ENCODE measurements at regions of chr6 and their contacts with region 1.

Region 1: DNA sequence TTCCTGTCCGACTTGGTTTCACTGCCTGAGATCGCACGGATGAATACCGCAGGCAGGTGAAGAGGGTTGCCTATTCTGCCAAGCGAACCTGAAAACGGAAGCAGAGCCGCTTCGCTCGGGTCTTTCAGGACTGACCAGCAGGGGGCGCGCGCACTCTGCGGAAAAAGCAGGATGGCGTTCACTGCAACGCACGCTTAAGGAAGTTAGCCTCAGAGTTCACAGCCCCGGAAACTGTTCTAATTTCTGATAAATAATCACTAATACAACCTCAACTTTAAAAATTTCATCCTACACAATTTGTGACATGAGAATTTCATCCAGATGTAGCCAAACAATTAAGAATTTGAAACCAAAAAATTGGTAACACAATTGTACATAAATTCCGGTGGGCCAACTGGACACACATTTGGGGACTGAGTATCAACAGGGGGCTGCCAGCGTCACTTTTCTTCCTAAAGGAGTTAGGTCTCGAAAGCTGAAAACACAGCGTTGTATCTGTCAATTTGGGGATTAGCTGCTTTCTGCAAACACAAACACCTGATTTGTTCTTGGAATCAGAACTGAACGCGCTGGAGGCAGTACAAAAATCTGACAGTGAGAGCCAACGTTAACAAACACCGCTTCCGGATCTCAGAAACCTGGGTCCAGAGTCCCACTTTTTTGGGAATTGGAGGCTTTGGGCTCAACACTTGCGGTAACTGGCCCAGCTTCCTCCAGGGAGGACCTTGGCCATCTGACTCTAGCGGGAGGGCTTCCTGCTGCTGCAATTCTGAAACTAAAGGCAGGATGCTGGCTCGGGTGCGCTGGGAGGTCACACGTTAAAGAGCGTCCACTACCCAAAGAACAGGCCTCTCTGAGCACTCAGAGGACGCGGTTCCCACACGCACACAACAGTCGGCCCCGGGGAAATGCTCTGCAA is 8.8 kb downstream of the PXDC1 start:
- DNase-seq: peak; percentile 92
- H3K4me3 ChIP-seq: peak overlapping the region in 3 of 4 donors; percentile 11 to 22 (median 19)
- H3K27ac ChIP-seq: peak overlapping the region; percentile 74 to 100 (median 88)
- H3K4me1 ChIP-seq: peaks cover 0 to 99% (median 93%) of the 10 kb centered on the region in 4 donors
- H3K27me3 ChIP-seq: no peaks in the 10 kb centered on the region
- CTCF ChIP-seq: peak; percentile 86 to 96 (median 94)
- EP300 ChIP-seq: peak in 2 of 4 donors; percentile 13 to 18
- POLR2A ChIP-seq: no peak

Region 2: GRCh38 chr6:3848925-3849605 is 106.4 kb after region 1 on chr6 and contains the start of gene FAM50B:
- intact Hi-C with region 1: loop called (anchors 1 kb)
- DNase-seq: peak; percentile 96
- H3K4me3 ChIP-seq: peak within 1 kb of the TSS; percentile 39 to 55 (median 49)
- H3K27ac ChIP-seq: peak within 1 kb of the TSS; percentile 67 to 80 (median 73)
- H3K4me1 ChIP-seq: peaks cover 0 to 25% (median 8%) of the 10 kb centered on the region in 4 donors
- H3K27me3 ChIP-seq: no peaks in the 10 kb centered on the region
- CTCF ChIP-seq: peak; percentile 83 to 99 (median 96)
- EP300 ChIP-seq: no peak
- POLR2A ChIP-seq: no peak
- total RNA-seq, gene FAM50B: 9.6 to 16.1 (median 13.3) TPM

Region 3: GRCh38 chr6:3887150-3887700 is 144.5 kb after region 1 on chr6:
- intact Hi-C with region 1: loop called (anchors 1 kb)
- DNase-seq: no peak
- H3K4me3 ChIP-seq: no peak overlapping the region
- H3K27ac ChIP-seq: no peak overlapping the region
- H3K4me1 ChIP-seq: peaks cover 0 to 12% (median 4%) of the 10 kb centered on the region in 4 donors
- H3K27me3 ChIP-seq: no peaks in the 10 kb centered on the region
- CTCF ChIP-seq: peak in 3 of 4 experiments; percentile 13 to 47 (median 46)
- EP300 ChIP-seq: no peak
- POLR2A ChIP-seq: no peak

Region 4: DNA sequence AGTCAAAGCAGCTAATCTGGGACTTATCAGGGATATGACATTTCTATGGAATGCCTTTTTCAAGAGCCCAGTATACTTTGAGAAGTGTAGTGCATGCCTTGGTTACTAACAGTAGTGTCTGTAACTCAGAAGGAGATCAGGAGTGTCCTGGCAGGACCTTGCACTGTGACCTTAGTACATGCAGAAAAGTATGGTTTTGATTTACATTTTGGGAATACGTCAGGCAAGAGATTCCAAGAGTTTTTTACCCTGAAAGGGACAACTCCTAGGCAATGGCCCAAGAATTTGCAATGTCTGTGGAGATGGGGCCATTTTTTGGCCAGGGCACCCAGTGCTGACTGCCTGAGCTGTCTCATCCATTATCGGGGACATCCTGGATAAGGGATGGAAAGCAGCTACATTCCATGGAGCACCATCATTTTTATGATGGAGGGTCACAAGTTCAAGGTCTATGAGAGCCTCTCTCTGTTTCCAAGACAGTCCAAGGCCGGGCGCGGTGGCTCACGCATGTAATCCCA is 186.7 kb after region 1 on chr6:
- intact Hi-C with region 1: loop called (anchors 1 kb)
- DNase-seq: peak; percentile 75
- H3K4me3 ChIP-seq: no peak overlapping the region
- H3K27ac ChIP-seq: peak overlapping the region; percentile 39 to 75 (median 66)
- H3K4me1 ChIP-seq: peaks cover 0 to 33% (median 18%) of the 10 kb centered on the region in 4 donors
- H3K27me3 ChIP-seq: no peaks in the 10 kb centered on the region
- CTCF ChIP-seq: no peak
- EP300 ChIP-seq: peak in 1 of 4 donors; percentile 27
- POLR2A ChIP-seq: no peak

Region 5: DNA sequence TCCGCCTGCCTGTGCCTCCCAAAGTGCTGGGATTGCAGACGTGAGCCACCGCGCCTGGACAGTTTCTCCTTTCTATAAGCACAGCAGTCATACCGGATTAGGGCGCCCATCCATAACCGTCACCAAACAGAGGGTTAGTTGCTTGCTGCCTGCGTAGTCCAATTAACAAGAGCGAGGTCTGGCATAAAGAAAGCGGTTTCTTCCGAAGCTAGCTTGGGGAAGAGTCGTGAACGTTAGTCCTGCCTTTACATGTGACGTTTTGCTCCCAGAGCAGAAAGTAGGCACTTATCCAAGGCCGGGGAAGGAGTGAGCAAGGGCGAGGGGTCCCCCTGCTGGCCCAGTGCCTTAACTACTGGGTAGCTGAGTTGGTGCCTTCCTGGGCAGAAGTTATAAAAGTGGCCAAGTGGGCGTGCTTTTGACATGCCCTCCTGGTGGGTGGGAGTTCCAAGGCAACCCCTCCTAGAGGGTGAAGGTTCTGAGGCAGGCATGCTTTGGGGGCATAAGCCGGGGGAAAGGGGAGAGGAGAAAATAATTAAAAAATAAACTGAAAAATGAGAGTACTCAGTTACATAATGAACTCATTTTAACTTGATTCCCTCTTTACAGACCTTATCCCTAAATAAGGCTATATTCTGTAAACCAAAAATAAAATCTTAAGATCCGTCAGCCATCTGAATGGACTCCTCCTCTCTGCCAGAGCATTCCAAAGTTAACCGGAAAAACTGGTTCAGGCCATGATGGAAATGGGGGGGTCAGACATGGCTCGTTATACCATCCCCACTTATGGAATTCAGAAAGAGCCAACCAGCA is 248.2 kb after region 1 on chr6:
- intact Hi-C with region 1: loop called (anchors 1 kb)
- DNase-seq: peak; percentile 96
- H3K4me3 ChIP-seq: peak overlapping the region; percentile 33 to 52 (median 49)
- H3K27ac ChIP-seq: peak overlapping the region; percentile 75 to 84 (median 78)
- H3K4me1 ChIP-seq: peaks cover 0 to 22% (median 14%) of the 10 kb centered on the region in 4 donors
- H3K27me3 ChIP-seq: no peaks in the 10 kb centered on the region
- CTCF ChIP-seq: peak; percentile 69 to 82 (median 76)
- EP300 ChIP-seq: no peak
- POLR2A ChIP-seq: no peak

Region 6: GRCh38 chr6:4008324-4009047 is 265.8 kb after region 1 on chr6:
- intact Hi-C with region 1: loop called (anchors 5 kb)
- DNase-seq: no peak
- H3K4me3 ChIP-seq: no peak overlapping the region
- H3K27ac ChIP-seq: peak overlapping the region in 3 of 4 donors; percentile 33 to 65 (median 54)
- H3K4me1 ChIP-seq: peaks cover 0 to 23% (median 9%) of the 10 kb centered on the region in 4 donors
- H3K27me3 ChIP-seq: no peaks in the 10 kb centered on the region
- CTCF ChIP-seq: peak; percentile 14 to 31 (median 23)
- EP300 ChIP-seq: no peak
- POLR2A ChIP-seq: no peak

Measured in sigmoid colon (tissue), 7 donors.